ENCODE measurements at regions of chr1 and their contacts with region 1.

Region 1: DNA sequence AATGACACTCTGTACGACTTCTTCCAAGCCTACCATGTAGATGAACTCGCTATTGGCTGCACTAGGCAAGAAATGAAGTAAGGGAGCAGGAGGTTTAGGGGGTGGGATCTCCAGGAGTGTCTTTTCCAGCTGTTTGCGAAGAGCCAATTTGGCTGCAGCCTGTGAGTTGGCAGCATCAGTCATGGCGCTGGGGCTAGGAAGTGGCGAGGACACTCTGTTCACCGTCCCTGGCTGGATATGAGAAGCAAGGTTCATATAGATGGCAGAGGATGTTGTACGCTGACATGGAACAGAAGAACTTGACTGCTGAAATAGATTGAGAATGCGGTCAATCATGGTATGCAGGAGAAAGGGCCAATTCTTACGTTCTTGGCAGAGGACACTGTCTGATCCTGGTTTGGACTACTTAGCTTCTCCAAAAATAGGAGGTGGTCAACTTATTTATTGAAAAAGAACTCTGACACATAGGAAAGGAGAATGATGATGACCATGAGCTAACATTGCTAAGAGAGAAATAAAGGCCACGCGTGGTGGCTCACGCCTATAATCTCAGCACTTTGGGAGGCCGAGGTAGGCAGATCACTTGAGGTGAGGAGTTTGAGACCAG is 41.2 kb downstream of the SLC27A3 start:
- DNase-seq: no peak
- ATAC-seq: no peak
- H3K4me3 ChIP-seq: no peak overlapping the region
- H3K27ac ChIP-seq: no peak overlapping the region
- H3K4me1 ChIP-seq: no peaks in the 10 kb centered on the region
- H3K27me3 ChIP-seq: no peaks in the 10 kb centered on the region
- CTCF ChIP-seq: no peak

Region 2: GRCh38 chr1:153929981-153930948 is 113.9 kb after region 1 on chr1:
- intact Hi-C with region 1: loop called in 1 of 3 experiments (anchors 10 kb)
- DNase-seq: peak in 1 of 6 donors; percentile 37
- ATAC-seq: no peak
- H3K4me3 ChIP-seq: no peak overlapping the region
- H3K27ac ChIP-seq: no peak overlapping the region
- H3K4me1 ChIP-seq: no peaks in the 10 kb centered on the region
- H3K27me3 ChIP-seq: no peaks in the 10 kb centered on the region
- CTCF ChIP-seq: no peak

Region 3: DNA sequence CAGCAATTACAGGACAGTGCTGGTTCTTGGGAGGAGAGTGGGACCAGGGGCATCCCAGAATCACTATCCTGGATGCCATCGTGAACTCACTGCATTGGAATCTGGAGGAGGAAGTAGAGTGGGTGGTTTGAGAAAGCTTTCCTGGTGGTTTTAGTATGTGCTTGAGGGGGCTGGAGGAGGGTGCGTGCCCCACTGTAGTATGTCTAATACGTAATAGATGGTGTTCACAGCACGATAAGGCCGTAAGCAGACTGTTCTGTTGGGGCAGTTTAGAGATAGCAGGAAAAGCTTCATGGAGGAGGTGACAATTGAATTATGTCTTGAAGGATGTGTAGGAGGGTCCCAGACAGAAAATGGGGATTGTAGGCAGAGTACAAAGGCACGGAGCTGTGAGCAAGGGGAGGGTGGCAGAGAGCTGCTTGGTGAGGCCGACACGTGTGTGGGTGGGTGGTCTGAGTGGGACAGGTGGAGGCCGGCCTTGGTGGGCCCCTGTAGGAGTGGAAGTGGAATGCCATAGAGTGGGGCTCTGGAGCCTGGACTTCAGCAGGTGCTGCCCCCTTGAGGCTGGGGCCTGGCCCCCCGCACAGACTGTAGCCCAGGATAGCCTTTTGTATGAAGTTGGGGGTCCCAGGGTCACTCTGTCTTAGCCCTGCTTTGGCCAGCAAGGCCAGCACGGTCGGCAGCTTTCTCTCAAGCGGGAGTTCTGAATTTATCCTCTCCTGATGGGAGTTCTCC is 625.8 kb after region 1 on chr1:
- intact Hi-C with region 1: no loop called
- DNase-seq: no peak
- ATAC-seq: peak in 2 of 4 donors; percentile 51 to 64
- H3K4me3 ChIP-seq: no peak overlapping the region
- H3K27ac ChIP-seq: peak overlapping the region in 1 of 4 donors; percentile 17
- H3K4me1 ChIP-seq: peaks cover 0 to 4% (median 0%) of the 10 kb centered on the region in 3 donors
- H3K27me3 ChIP-seq: no peaks in the 10 kb centered on the region
- CTCF ChIP-seq: peak in 1 of 4 donors; percentile 11

Measured in pancreas (tissue), 10 donors.